HCT116 (cell line): ENCODE measurements at regions of chr22 and their contacts with region 1.

Region 1: GRCh38 chr22:39789788-39790187 is 103.8 kb downstream of the ENTHD1 start:
- DNase-seq: no peak
- ATAC-seq: no peak
- H3K4me3 ChIP-seq: no peak overlapping the region
- H3K27ac ChIP-seq: no peak overlapping the region
- H3K4me1 ChIP-seq: no peaks in the 10 kb centered on the region
- H3K27me3 ChIP-seq: peaks cover 17% of the 10 kb centered on the region; the same call in 1 of the 2 replicates
- CTCF ChIP-seq: no peak
- POLR2A ChIP-seq: no peak
- RAD21 ChIP-seq: no peak

Region 2: GRCh38 chr22:39777716-39778454 is 11.9 kb before region 1 on chr22:
- CTCF ChIA-PET with region 1: no interaction called
- POLR2A ChIA-PET with region 1: no interaction called
- RAD21 ChIA-PET with region 1: no interaction called
- intact Hi-C with region 1: loop called (anchors 2 kb)
- DNase-seq: no peak
- ATAC-seq: no peak
- H3K4me3 ChIP-seq: no peak overlapping the region
- H3K27ac ChIP-seq: no peak overlapping the region
- H3K4me1 ChIP-seq: no peaks in the 10 kb centered on the region
- H3K27me3 ChIP-seq: peaks cover 93% of the 10 kb centered on the region
- CTCF ChIP-seq: no peak
- POLR2A ChIP-seq: no peak
- RAD21 ChIP-seq: no peak

Region 3: DNA sequence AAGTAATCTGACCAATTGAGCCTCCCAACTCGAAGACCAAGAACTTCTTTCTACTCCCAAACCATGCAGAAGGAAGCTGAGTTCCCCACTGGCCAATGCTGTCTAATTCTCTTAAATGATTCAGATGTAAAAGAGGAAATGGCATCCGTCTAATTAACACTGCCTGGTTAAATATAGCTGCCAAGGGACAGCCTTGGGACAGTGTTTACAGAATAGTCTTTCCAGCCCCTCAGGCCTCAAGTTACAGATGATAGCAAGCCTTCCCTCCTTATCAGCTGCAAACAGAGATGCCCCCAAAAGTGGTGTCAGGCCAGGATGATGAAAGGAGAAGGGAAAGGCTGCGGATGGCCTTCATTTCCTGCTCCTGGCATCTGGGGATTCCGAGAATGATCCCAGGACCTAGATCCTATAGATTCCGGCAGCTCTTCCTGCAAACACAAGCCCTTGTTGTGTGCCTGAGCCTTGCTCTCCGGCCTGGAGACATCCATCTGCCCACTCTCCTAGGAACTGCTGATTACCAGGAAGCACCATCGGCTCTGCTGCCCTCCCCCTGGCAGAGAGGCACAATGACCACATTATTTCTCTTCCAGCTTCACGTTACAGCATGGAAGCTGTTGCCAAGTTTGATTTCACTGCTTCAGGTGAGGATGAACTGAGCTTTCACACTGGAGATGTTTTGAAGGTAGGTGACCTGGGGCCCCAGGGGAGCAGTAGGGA is 156.9 kb after region 1 on chr22:
- CTCF ChIA-PET with region 1: no interaction called
- POLR2A ChIA-PET with region 1: no interaction called
- RAD21 ChIA-PET with region 1: no interaction called
- intact Hi-C with region 1: no loop called
- DNase-seq: no peak
- ATAC-seq: no peak
- H3K4me3 ChIP-seq: no peak overlapping the region
- H3K27ac ChIP-seq: no peak overlapping the region
- H3K4me1 ChIP-seq: peaks cover 0 to 4% of the 10 kb centered on the region in 2 experiments; a peak in 1 of 4 replicates
- H3K27me3 ChIP-seq: no peaks in the 10 kb centered on the region
- CTCF ChIP-seq: no peak
- POLR2A ChIP-seq: no peak
- RAD21 ChIP-seq: no peak

Region 4: DNA sequence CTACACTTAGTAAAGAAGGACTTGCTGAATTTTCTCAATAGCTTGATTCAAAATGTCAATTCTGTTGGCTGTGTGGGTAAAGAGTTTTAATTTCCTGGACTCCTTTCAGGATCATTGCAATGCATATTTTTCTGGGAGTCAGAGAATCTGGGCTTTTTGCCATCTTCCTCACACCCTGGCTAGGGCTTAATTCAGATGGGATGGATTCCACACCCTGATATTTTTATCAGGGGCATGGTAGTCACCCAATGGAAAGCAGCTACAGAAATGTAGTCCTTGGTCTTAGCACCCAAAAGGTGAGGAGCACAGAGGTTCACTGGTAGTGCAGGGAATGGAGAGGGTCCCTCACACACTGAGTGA is 659.9 kb after region 1 on chr22:
- CTCF ChIA-PET with region 1: no interaction called
- POLR2A ChIA-PET with region 1: no interaction called
- RAD21 ChIA-PET with region 1: no interaction called
- intact Hi-C with region 1: no loop called
- DNase-seq: no peak
- ATAC-seq: no peak
- H3K4me3 ChIP-seq: no peak overlapping the region
- H3K27ac ChIP-seq: no peak overlapping the region
- H3K4me1 ChIP-seq: 0 out of 4 replicates have a peak, but pooled peaks cover 2 to 3% of the 10 kb centered on the region in 2 experiments
- H3K27me3 ChIP-seq: no peaks in the 10 kb centered on the region
- CTCF ChIP-seq: no peak
- POLR2A ChIP-seq: no peak
- RAD21 ChIP-seq: no peak